Activated CD4-positive, alpha-beta T cell treated with anti-CD3 and anti-CD28 coated beads for 36 hours (primary cell): ENCODE measurements at regions of chr3 and their contacts with region 1.

Region 1: DNA sequence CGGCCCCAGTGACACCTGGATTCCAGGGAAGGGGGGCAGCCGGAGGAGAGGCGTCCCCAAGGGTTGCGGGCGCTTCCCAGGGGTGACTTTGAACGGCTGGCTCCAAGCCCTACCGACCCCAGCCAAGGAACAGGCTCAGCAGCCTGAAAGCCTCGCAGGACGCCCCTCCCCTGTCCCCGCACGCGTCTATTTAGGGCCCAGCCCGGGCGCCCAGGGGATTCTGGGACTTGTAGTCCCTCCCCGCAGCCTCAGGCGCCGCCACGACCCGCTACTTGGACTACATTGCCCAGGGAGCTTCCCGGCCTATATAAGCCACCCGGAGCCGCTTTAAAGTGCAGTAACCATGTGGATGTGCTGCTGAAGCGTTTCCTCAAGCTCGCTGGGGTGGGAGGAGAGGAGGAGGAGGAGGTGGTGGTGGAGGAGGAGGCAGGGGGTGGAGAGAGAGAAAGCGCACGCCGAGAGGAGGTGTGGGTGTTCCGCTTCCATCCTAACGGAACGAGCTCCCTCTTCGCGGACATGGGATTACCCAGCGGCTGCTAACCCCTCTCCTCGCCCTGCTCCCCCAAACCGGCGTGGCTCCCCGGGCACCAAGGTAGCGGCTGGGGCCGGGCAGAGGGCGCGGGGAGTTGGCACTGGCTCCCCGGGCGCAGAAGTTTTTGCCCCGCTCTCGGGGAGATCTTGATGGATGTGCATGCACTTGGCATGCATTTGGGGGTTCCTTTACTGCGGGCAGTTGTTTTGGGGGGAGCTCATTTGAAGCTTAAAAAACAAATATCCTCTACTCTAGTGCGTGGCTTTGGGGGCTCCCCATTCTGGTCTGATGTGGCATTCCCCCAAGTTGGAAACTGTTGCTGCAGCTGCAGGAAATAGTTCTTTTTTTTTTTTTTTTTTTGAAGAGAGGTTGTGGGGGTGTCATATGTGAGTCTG is at the start of gene ITPR1:
- DNase-seq: peak; percentile 99
- ATAC-seq: peak; percentile 95
- H3K4me3 Mint-ChIP-seq: peak within 1 kb of the TSS; percentile 77
- H3K27ac Mint-ChIP-seq: peak within 1 kb of the TSS; percentile 71
- H3K4me1 Mint-ChIP-seq: peaks cover 32% of the 10 kb centered on the region
- H3K27me3 Mint-ChIP-seq: peaks cover 8% of the 10 kb centered on the region
- total RNA-seq, gene ITPR1: 48.6 to 55.6 TPM

Region 2: GRCh38 chr3:3179407-3180094 is 1313.7 kb before region 1 on chr3 and contains the start of gene CRBN:
- CTCF ChIA-PET with region 1: no interaction called
- POLR2A ChIA-PET with region 1: no interaction called
- intact Hi-C with region 1: loop called in 1 of 2 experiments (anchors 10 kb)
- DNase-seq: peak; percentile 93
- ATAC-seq: peak; percentile 92
- H3K4me3 Mint-ChIP-seq: peak within 1 kb of the TSS; percentile 87
- H3K27ac Mint-ChIP-seq: peak within 1 kb of the TSS; percentile 95
- H3K4me1 Mint-ChIP-seq: peaks cover 49% of the 10 kb centered on the region
- H3K27me3 Mint-ChIP-seq: no peaks in the 10 kb centered on the region
- total RNA-seq, gene CRBN: 38.4 to 42.6 TPM

Region 3: GRCh38 chr3:4376499-4376898 is 116.8 kb before region 1 on chr3:
- CTCF ChIA-PET with region 1: no interaction called
- POLR2A ChIA-PET with region 1: no interaction called
- intact Hi-C with region 1: no loop called
- DNase-seq: no peak
- ATAC-seq: peak; percentile 44
- H3K4me3 Mint-ChIP-seq: no peak overlapping the region
- H3K27ac Mint-ChIP-seq: no peak overlapping the region
- H3K4me1 Mint-ChIP-seq: no peaks in the 10 kb centered on the region
- H3K27me3 Mint-ChIP-seq: no peaks in the 10 kb centered on the region

Region 4: GRCh38 chr3:4426601-4427344 is 66.5 kb before region 1 on chr3:
- CTCF ChIA-PET with region 1: no interaction called
- POLR2A ChIA-PET with region 1: interaction called, 7 read pairs
- intact Hi-C with region 1: loop called in 1 of 2 experiments (anchors 2 kb)
- DNase-seq: no peak
- ATAC-seq: no peak
- H3K4me3 Mint-ChIP-seq: no peak overlapping the region
- H3K27ac Mint-ChIP-seq: no peak overlapping the region
- H3K4me1 Mint-ChIP-seq: peaks cover 27% of the 10 kb centered on the region
- H3K27me3 Mint-ChIP-seq: no peaks in the 10 kb centered on the region

Region 5: DNA sequence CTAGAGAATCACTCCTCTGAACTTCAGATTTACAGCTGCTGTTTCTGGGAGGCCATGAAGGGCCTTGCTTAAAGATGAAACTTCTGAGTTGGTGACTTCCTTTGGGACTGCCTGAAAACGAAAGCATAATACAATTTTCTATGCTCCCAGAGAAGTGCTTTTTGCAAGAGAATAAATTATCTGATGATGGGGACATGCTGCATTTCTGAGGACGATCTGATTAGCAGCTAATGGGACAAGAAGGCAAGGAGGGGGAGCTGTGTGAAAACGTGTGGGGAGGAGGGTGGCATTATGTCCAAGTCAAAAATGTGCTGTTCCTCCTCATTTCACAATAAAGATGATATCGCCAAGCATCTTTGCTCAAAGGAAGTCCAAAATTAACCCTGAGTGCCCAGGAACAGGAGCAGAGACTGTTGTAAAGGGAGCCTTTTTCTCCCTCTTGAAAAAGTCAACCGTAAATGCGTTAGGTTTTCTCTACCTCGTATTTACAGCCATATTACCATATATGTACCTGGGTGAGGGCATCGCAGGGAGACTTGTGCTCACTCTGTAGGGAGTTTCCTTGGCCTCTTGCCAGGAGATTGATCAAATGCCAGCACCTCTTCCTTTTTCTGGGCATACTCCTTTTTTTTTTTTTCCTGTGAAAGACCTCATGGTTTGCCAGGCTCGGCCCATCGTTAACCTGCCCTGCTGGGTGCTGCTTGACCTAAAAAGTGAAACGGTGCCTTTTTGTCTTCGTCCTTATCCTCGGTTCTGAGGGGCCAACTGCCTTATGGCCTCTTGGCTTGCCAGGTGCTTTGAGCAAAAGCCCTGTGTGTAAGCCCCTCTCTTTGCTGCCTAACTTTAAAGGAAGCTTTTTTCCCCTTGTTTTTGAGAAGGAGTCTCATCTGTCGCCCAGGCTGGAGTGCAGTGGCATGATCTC is 11.3 kb after region 1 on chr3:
- CTCF ChIA-PET with region 1: interaction called, 10 read pairs
- POLR2A ChIA-PET with region 1: interaction called, 8 read pairs
- intact Hi-C with region 1: loop called in 1 of 2 experiments (anchors 1 kb)
- DNase-seq: peak; percentile 51
- ATAC-seq: peak; percentile 81
- H3K4me3 Mint-ChIP-seq: peak overlapping the region; percentile 72
- H3K27ac Mint-ChIP-seq: peak overlapping the region; percentile 95
- H3K4me1 Mint-ChIP-seq: peaks cover 54% of the 10 kb centered on the region
- H3K27me3 Mint-ChIP-seq: no peaks in the 10 kb centered on the region

Region 6: GRCh38 chr3:4633078-4634004 is 140.1 kb after region 1 on chr3:
- CTCF ChIA-PET with region 1: interaction called, 9 read pairs
- POLR2A ChIA-PET with region 1: no interaction called
- intact Hi-C with region 1: loop called (anchors 1 to 10 kb)
- DNase-seq: no peak
- ATAC-seq: peak; percentile 57
- H3K4me3 Mint-ChIP-seq: no peak overlapping the region
- H3K27ac Mint-ChIP-seq: peak overlapping the region; percentile 37
- H3K4me1 Mint-ChIP-seq: peaks cover 6% of the 10 kb centered on the region
- H3K27me3 Mint-ChIP-seq: no peaks in the 10 kb centered on the region

Region 7: GRCh38 chr3:5122030-5122740 is 628.9 kb after region 1 on chr3 and contains the start of gene ARL8B:
- CTCF ChIA-PET with region 1: no interaction called
- POLR2A ChIA-PET with region 1: no interaction called
- intact Hi-C with region 1: loop called in 1 of 2 experiments (anchors 1 kb)
- DNase-seq: peak; percentile 96
- ATAC-seq: peak; percentile 84
- H3K4me3 Mint-ChIP-seq: peak within 1 kb of the TSS; percentile 83
- H3K27ac Mint-ChIP-seq: peak within 1 kb of the TSS; percentile 94
- H3K4me1 Mint-ChIP-seq: peaks cover 42% of the 10 kb centered on the region
- H3K27me3 Mint-ChIP-seq: no peaks in the 10 kb centered on the region
- total RNA-seq, gene ARL8B: 44.7 to 45.1 TPM